ENCODE measurements at regions of chr12 and their contacts with region 1.

Region 1: GRCh38 chr12:51238510-51239334 is at the start of gene DAZAP2:
- DNase-seq: peak; percentile 98
- total RNA-seq, gene DAZAP2: 169 TPM

Region 2: GRCh38 chr12:51083126-51083833 is 155.4 kb before region 1 on chr12 and contains the start of gene CSRNP2:
- intact Hi-C with region 1: loop called (anchors 2 kb)
- DNase-seq: peak; percentile 99
- total RNA-seq, gene CSRNP2: 30.1 TPM

Region 3: GRCh38 chr12:51172515-51173431 is 65.9 kb before region 1 on chr12 and contains the start of gene TFCP2:
- intact Hi-C with region 1: loop called (anchors 2 kb)
- DNase-seq: peak; percentile 99
- total RNA-seq, gene TFCP2: 20.2 TPM

Region 4: DNA sequence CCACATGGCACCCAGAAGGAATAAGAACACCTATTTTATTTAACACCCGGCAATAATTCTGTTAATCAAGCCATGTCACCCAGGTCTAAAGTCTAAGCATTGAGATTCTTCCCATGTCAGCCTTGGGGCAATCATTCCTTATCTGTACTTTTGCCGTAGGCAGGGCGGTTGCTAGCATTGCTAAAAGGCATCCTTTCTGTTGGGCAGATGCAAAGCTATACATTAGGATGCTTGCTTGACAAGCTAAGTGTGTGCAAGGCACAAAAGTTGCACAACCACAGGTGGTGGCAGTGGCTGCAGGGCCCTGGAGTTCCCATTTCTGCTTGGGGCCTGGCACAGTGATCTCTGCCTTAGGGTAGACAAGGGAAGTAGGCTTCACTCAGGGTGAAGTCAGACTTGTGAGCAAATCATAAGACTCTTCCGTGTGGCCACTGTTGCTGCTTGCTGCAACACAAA is 165.0 kb after region 1 on chr12:
- intact Hi-C with region 1: no loop called
- DNase-seq: no peak

Measured in cardiac septum (tissue), 1 donor.